ENCODE measurements at regions of chr11 and their contacts with region 1.

Region 1: DNA sequence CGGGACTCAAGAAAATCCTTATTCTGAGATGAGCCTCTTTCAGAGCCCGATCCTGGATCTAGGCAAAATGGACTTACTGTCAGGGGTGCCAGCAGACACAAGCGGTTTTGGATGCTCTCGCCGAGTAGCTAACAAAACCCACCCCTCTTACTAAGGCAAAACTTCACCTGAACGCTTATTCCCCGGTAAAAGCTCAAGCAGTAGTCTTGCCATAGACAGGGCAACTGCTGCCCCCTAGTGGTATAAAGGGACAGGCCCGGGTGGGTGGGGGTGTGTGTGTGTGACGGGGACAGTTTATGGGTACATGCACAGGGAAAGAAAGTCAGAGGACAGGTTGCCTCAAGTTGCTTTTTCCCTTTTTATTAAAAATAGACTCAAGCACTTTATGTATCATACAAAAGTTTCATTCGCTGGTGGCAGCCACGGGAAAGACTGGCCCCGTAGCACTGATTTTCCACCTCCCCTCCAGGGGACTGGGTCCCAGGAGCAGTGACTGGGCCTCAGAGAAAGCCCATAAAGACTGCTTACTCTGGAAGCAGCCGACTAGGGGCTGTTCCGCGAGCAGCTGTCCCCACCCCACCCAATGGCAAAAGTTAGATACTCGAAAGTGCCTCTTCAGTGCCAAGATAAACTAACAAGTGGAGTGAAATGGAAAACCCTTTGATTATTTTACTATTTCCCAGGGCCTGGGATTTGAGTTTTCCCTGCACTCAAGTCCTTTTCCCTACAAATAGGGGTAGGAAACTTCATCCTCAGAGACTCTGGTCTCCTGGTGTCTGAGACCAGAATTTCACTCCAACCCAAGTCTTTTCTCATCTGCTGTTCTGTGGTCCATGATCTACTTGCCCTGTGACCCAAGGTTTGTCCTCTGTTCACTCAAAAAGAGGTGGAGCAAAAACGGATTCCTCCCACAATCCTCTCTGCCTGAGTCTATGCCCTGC is 4.7 kb downstream of the YPEL4 start:
- H3K4me3 ChIP-seq: no peak overlapping the region
- H3K27ac ChIP-seq: no peak overlapping the region
- H3K4me1 ChIP-seq: 0 out of 2 replicates have a peak, but pooled peaks cover 6% of the 10 kb centered on the region
- CTCF ChIP-seq: peak; percentile 40; the same call in 1 of the 2 replicates

Region 2: GRCh38 chr11:57345555-57346211 is 299.3 kb before region 1 on chr11:
- CTCF ChIA-PET with region 1: interaction called, 12 read pairs
- POLR2A ChIA-PET with region 1: interaction called, 6 read pairs
- H3K4me3 ChIP-seq: no peak overlapping the region
- H3K27ac ChIP-seq: no peak overlapping the region
- H3K4me1 ChIP-seq: no peaks in the 10 kb centered on the region
- CTCF ChIP-seq: 0 out of 2 replicates have a peak, but pooled peaks have one; percentile 26

Region 3: DNA sequence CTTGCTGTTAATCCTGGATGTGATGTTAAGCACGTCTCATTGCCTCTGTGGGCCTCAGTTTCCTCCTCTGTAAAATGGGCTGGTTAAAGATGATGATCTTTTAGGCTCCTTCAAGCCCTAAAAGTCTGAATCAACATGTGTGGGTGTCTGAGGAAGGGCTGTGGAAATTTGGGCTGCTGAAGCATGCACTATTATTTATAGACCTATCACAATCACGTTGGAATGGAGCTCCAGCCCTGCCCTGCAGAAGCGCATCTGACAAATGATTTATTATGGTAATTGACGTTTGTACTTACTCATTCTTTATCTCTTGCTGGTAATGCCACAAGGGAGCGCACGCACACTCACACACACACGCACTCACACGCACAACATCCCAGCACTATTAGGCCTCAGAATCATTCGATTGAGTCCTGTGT is 286.5 kb before region 1 on chr11:
- CTCF ChIA-PET with region 1: interaction called, 13 read pairs
- POLR2A ChIA-PET with region 1: no interaction called
- H3K4me3 ChIP-seq: no peak overlapping the region
- H3K27ac ChIP-seq: no peak overlapping the region
- H3K4me1 ChIP-seq: no peaks in the 10 kb centered on the region
- CTCF ChIP-seq: no peak

Region 4: DNA sequence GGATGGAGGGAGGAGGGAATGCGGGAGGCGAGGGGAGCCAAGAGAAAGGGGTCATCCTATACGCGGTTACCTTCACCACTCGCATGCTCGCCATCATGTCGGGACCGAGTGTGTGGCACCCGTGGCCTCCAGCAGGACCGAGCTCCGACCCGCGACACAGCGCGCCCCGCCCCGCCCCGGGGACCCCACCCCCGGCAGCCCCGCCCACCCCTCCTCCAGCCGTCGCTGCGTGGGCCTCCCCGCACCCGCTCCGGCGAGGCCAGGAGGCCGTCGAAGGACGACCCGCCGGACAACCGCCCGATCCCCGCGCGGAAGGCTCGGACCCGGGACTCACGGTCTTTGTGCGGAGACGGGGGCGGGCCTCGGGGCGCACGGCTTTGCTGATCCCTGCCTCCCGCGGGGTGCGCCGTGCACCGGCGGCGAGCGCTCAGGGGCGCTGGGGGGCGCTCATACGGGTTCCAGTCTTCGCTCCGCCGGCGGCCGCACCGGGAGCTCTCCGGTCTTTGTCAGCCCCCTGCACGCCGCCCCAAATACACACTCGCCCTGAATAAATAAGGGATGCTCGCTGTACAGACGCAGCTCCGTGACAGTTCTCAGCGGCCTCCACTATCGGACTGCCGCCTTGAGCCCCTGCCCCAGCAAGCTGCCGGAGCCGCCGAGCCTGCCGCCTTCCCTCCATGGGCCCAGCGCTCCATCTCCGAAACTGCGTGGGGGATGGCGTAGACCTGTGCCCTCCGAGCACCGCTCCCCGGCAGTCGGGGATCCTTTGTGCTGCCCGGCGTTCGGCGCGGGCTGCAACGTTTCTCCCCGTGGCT is 77.3 kb before region 1 on chr11 and contains the start of gene UBE2L6:
- CTCF ChIA-PET with region 1: interaction called, 183 read pairs
- POLR2A ChIA-PET with region 1: interaction called, 13 read pairs
- H3K4me3 ChIP-seq: peak within 1 kb of the TSS; percentile 73
- H3K27ac ChIP-seq: no peak within 1 kb of the TSS; the same call in 1 of the 2 replicates
- H3K4me1 ChIP-seq: no peaks in the 10 kb centered on the region
- CTCF ChIP-seq: peak; percentile 64; the same call in 1 of the 2 replicates

Region 5: DNA sequence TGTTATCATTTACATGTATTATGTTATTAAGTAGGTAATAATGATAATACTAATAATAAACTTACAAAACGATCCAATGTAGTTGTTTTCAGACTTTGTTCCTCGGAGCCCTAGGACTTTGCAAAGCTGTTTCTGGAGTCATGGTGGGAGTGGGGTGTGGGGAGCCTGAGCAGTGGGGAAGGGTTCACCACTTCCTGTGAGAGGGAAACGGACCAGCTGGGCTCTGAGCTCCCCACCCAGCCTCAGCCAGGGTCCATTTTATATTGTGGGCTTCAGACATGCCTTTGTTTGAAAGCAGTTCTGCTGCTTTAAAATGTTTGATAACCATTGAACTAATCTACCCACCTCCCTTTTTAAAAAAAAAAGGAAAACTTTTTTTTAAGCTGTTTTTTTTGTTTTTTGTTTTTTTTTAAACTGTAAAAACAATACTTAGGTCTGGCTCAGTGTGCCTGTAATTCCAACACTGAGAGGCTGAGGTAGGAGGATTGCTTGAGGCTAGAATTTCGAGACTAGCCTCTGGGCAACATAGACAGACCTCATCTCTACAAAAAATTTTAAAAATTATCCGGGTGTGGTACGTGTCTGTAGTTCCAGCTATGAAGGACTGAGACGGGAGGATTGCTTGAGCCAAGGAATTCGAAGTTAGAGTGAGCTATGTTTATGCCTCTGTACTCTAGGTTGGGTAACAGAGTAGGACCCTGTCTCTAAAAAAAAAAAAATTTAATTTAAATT is 40.6 kb before region 1 on chr11:
- CTCF ChIA-PET with region 1: interaction called, 15 read pairs
- POLR2A ChIA-PET with region 1: interaction called, 3 read pairs
- H3K4me3 ChIP-seq: no peak overlapping the region
- H3K27ac ChIP-seq: no peak overlapping the region
- H3K4me1 ChIP-seq: no peaks in the 10 kb centered on the region
- CTCF ChIP-seq: no peak

Region 6: DNA sequence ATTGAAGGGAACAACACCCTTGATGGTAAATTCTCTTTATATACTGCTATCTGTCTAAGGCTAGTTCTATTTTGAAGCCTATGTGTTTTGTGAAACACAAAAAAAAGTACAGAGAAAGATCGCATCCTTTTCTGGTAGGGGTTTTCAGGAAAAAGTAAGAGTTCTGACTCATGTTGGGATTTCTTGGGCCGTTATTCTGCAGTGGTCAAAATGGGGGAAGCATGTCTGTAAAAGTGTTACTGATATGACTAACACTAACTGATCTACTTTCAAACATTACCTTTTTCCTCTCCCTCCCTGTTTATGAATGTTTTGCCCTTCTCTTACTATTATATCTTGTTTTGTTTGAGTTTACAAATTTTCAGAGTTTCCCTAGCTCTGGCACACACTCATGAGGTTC is 170.5 kb after region 1 on chr11:
- CTCF ChIA-PET with region 1: no interaction called
- POLR2A ChIA-PET with region 1: no interaction called
- H3K4me3 ChIP-seq: no peak overlapping the region
- H3K27ac ChIP-seq: no peak overlapping the region
- H3K4me1 ChIP-seq: no peaks in the 10 kb centered on the region
- CTCF ChIP-seq: no peak

Measured in HEK293 (cell line).